Endothelial cell of umbilical vein (primary cell): ENCODE measurements at regions of chr5 and their contacts with region 1.

Region 1: DNA sequence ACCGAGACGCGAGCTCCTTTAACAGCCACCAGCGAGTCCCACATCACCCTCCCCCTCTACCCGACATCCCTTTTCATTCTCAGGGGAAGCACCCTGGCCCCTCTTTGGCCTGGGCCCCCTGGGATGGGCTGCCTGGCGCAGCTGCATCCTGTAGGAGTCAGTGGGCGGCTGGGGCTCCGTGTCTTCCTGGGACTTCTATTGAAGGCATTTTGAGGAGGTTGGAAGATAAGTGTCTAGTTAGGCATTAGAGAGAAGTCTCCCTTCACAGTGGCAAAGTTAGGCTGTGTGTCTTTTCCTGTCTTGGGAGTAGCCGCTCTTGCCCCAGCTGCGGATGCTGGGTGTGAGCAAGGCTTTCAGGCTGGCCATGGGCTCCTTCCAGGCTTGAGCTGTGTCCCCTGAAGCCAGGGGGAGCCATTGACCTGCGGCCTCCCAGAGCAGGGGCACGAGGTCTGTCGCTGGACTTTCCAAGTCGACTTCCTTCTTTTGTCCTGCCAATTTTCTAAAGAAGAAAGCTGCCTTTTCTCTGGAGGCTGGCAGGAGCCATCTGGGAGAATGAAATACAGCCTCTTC is 18.6 kb upstream of the NKD2 start:
- DNase-seq: peak; percentile 62
- H3K4me3 ChIP-seq: no peak overlapping the region
- H3K27ac ChIP-seq: no peak overlapping the region
- H3K4me1 ChIP-seq: peaks cover 3% of the 10 kb centered on the region
- H3K27me3 ChIP-seq: peaks cover 3 to 4% of the 10 kb centered on the region in 2 experiments
- CTCF ChIP-seq: peak; percentile 5 to 24
- POLR2A ChIP-seq: no peak

Region 2: GRCh38 chr5:1140171-1140817 is 150.2 kb after region 1 on chr5:
- CTCF ChIA-PET with region 1: interaction called, 7 read pairs
- POLR2A ChIA-PET with region 1: no interaction called
- dilution Hi-C with region 1: no loop called
- intact Hi-C with region 1: loop called (anchors 1 kb)
- DNase-seq: peak; percentile 42
- H3K4me3 ChIP-seq: no peak overlapping the region
- H3K27ac ChIP-seq: no peak overlapping the region
- H3K4me1 ChIP-seq: peaks cover 2% of the 10 kb centered on the region
- H3K27me3 ChIP-seq: no peaks in the 10 kb centered on the region
- CTCF ChIP-seq: peak; percentile 63 to 91
- POLR2A ChIP-seq: no peak

Region 3: GRCh38 chr5:1174122-1174936 is 184.3 kb after region 1 on chr5:
- CTCF ChIA-PET with region 1: interaction called, 12 read pairs
- POLR2A ChIA-PET with region 1: no interaction called
- dilution Hi-C with region 1: no loop called
- intact Hi-C with region 1: no loop called
- DNase-seq: peak; percentile 63
- H3K4me3 ChIP-seq: no peak overlapping the region
- H3K27ac ChIP-seq: no peak overlapping the region
- H3K4me1 ChIP-seq: no peaks in the 10 kb centered on the region
- H3K27me3 ChIP-seq: no peaks in the 10 kb centered on the region
- CTCF ChIP-seq: peak; percentile 80 to 84
- POLR2A ChIP-seq: no peak